ENCODE measurements at regions of chr7 and their contacts with region 1.

Region 1: DNA sequence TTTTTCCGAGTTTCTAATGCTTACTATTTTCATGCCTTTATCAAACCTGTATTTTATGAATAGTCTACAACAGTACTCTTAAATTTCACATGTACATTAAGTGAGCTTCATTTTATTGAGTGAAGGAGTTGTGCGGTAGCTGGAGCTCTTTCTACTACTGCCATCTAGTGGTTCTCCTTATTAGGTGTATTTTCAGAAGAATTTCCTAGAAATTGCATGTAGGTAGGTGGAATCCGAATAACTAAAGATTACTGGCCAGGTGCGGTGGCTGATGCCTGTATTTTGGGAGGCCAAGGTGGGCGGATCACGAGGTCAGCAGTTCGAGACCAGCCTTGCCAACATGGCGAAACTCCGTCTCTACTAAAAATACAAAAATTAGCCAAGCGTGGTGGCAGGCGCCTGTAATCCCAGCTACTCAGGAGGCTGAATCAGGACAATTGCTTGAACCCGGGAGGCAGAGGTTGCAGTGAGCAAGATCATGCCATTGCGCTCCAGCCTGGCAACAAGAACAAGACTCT is 38.3 kb downstream of the LRRC72 start:
- DNase-seq: no peak
- H3K4me3 ChIP-seq: no peak overlapping the region
- H3K27ac ChIP-seq: no peak overlapping the region
- H3K4me1 ChIP-seq: peaks cover 0 to 4% (median 0%) of the 10 kb centered on the region in 3 donors
- H3K27me3 ChIP-seq: peaks cover 0 to 5% (median 0%) of the 10 kb centered on the region in 4 donors
- CTCF ChIP-seq: peak; percentile 31 to 80 (median 70)
- POLR2A ChIP-seq: no peak

Region 2: DNA sequence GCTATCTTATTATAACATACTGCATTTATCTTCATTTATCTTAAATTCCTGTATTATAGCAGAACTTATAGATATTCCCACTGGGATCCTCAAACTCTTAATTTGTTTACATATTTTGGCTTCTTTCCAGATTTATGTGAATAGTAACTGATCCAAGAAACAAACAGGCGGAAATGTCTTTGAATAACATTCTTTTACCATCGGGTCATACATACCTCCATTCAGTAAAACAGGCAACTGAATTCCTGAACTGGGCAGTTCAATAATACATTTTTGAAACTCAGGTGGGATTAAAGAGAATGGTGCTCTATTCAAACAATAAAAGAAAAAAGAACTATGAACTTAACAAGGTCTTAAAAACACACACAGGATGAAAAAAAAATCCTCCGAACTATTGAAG is 481.0 kb before region 1 on chr7:
- intact Hi-C with region 1: loop called (anchors 10 kb)
- DNase-seq: no peak
- H3K4me3 ChIP-seq: no peak overlapping the region
- H3K27ac ChIP-seq: no peak overlapping the region
- H3K4me1 ChIP-seq: peaks cover 0 to 8% (median 0%) of the 10 kb centered on the region in 3 donors
- H3K27me3 ChIP-seq: no peaks in the 10 kb centered on the region
- CTCF ChIP-seq: no peak
- POLR2A ChIP-seq: no peak

Region 3: GRCh38 chr7:16431646-16432424 is 133.1 kb before region 1 on chr7:
- intact Hi-C with region 1: loop called (anchors 10 kb)
- DNase-seq: no peak
- H3K4me3 ChIP-seq: no peak overlapping the region
- H3K27ac ChIP-seq: no peak overlapping the region
- H3K4me1 ChIP-seq: no peaks in the 10 kb centered on the region
- H3K27me3 ChIP-seq: no peaks in the 10 kb centered on the region
- CTCF ChIP-seq: peak; percentile 14 to 63 (median 46)
- POLR2A ChIP-seq: no peak

Region 4: DNA sequence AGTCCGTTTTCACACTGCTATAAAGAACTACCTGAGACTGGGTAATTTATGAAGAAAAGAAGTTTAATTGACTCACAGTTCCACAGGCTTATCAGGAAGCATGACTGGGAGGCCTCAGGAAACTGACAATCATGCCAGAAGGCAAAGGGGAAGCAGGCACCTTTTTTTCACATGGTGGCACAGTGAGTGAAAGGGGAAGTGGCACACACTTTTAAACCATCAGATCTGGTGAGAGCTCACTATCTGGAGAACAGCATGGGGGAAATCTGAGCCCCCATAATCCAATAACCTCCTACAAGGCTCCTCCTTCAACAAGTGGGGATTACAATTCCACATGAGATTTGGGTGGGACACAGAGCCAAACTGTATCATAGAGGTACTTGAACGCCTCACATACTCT is 286.9 kb after region 1 on chr7:
- intact Hi-C with region 1: no loop called
- DNase-seq: no peak
- H3K4me3 ChIP-seq: no peak overlapping the region
- H3K27ac ChIP-seq: no peak overlapping the region
- H3K4me1 ChIP-seq: peaks cover 0 to 9% (median 0%) of the 10 kb centered on the region in 3 donors
- H3K27me3 ChIP-seq: no peaks in the 10 kb centered on the region
- CTCF ChIP-seq: no peak
- POLR2A ChIP-seq: no peak